MCF 10A (cell line): ENCODE measurements at regions of chr22 and their contacts with region 1.

Region 1: DNA sequence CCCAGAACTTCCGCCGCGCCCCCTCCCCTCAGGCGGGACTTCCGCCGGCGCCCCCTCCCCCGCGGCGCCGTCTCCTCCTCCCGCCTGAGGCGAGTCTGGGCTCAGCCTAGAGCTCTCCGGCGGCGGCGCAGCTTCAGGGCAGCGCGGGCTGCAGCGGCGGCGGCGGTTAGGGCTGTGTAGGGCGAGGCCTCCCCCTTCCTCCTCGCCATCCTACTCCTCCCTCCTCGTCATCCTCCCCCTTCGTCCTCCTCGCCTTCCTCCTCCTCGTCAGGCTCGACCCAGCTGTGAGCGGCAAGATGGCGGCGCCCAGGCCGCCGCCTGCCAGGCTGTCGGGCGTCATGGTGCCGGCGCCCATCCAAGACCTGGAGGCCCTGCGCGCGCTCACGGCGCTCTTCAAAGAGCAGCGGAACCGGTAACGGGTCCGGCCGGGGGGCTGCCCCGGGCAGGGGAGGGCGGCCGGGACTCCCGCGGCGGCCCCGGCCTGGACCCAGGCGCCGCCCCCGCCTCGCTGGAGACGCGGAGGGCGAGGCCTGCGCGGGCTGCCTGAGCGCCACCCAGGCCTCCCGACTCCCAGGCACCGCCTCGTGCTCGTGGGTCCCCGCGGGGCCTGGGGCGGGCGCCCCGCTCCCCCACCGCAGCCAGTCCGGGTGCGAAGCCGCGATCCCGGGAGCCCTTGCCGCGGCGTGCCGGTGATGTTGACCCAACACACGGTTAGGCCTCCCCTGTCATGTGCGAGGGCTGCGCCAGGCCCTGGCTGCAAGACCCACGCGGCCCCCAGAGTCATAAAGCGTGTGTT is at the start of gene ATXN10:
- DNase-seq: peak; percentile 69
- H3K4me3 Mint-ChIP-seq: peak within 1 kb of the TSS; percentile 88
- H3K27ac Mint-ChIP-seq: peak within 1 kb of the TSS; percentile 93
- H3K4me1 Mint-ChIP-seq: peaks cover 27% of the 10 kb centered on the region
- H3K27me3 Mint-ChIP-seq: no peaks in the 10 kb centered on the region
- CTCF ChIP-seq: no peak
- total RNA-seq, gene ATXN10: 149 and 193 TPM in 2 replicates

Region 2: DNA sequence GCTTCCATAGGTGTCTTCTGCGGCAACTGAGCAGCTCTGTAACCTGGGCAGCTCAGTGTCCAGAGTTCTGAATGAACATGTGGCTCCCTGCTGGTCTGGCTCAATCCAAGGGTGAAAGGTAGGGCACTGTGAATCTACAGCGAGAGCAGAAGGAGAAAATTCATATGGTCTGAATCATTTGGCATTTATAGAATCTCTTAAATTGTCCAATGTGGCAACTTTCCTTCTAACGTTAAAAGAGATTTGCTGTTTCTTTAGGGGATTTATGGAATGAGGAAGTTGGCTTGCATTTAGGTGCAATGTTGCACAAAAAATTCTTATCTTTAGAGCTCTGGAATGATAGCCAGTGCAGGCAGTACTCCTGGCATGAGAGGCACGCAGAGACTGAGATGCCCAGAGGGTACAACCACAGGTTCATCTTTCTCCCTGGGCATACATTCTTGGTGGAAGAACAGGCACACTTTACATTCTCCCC is 16.7 kb after region 1 on chr22:
- CTCF ChIA-PET with region 1: interaction called, 5 read pairs
- POLR2A ChIA-PET with region 1: interaction called, 44 read pairs
- intact Hi-C with region 1: no loop called
- DNase-seq: peak; percentile 77
- H3K4me3 Mint-ChIP-seq: peak overlapping the region; percentile 52
- H3K27ac Mint-ChIP-seq: peak overlapping the region; percentile 83
- H3K4me1 Mint-ChIP-seq: peaks cover 29% of the 10 kb centered on the region
- H3K27me3 Mint-ChIP-seq: no peaks in the 10 kb centered on the region
- CTCF ChIP-seq: no peak